Right cardiac atrium (tissue), 5 donors: ENCODE measurements at regions of chr13 and their contacts with region 1.

Region 1: GRCh38 chr13:32586080-32586900 is at the start of gene PDS5B:
- DNase-seq: peak; percentile 95 to 98 (median 98)
- ATAC-seq: peak; percentile 97 to 98
- H3K4me3 ChIP-seq: peak within 1 kb of the TSS; percentile 100
- H3K27ac ChIP-seq: peak within 1 kb of the TSS; percentile 96
- H3K4me1 ChIP-seq: no peaks in the 10 kb centered on the region
- H3K27me3 ChIP-seq: no peaks in the 10 kb centered on the region
- total RNA-seq, gene PDS5B: 22.3 to 30.7 (median 27.3) TPM

Region 2: GRCh38 chr13:32472194-32472621 is 114.1 kb before region 1 on chr13:
- intact Hi-C with region 1: no loop called
- DNase-seq: no peak
- ATAC-seq: no peak
- H3K4me3 ChIP-seq: no peak overlapping the region
- H3K27ac ChIP-seq: peak overlapping the region; percentile 2
- H3K4me1 ChIP-seq: peaks cover 3% of the 10 kb centered on the region
- H3K27me3 ChIP-seq: no peaks in the 10 kb centered on the region

Region 3: GRCh38 chr13:32639502-32640105 is 53.3 kb after region 1 on chr13:
- intact Hi-C with region 1: loop called (anchors 1 to 5 kb)
- DNase-seq: peak; percentile 39 to 82 (median 55)
- ATAC-seq: peak; percentile 81 to 86
- H3K4me3 ChIP-seq: no peak overlapping the region
- H3K27ac ChIP-seq: no peak overlapping the region
- H3K4me1 ChIP-seq: no peaks in the 10 kb centered on the region
- H3K27me3 ChIP-seq: no peaks in the 10 kb centered on the region

Region 4: GRCh38 chr13:32911506-32911905 is 325.2 kb after region 1 on chr13:
- intact Hi-C with region 1: loop called in 1 of 4 experiments (anchors 10 kb)
- DNase-seq: no peak
- ATAC-seq: peak; percentile 76 to 77
- H3K4me3 ChIP-seq: no peak overlapping the region
- H3K27ac ChIP-seq: no peak overlapping the region
- H3K4me1 ChIP-seq: no peaks in the 10 kb centered on the region
- H3K27me3 ChIP-seq: no peaks in the 10 kb centered on the region

Region 5: GRCh38 chr13:33723772-33724435 is 1137.6 kb after region 1 on chr13:
- intact Hi-C with region 1: loop called in 2 of 4 experiments (anchors 5 to 10 kb)
- DNase-seq: peak; percentile 68 to 82 (median 69)
- ATAC-seq: peak; percentile 82 to 84
- H3K4me3 ChIP-seq: no peak overlapping the region
- H3K27ac ChIP-seq: no peak overlapping the region
- H3K4me1 ChIP-seq: peaks cover 2% of the 10 kb centered on the region
- H3K27me3 ChIP-seq: no peaks in the 10 kb centered on the region